ENCODE measurements at regions of chr18 and their contacts with region 1.

Region 1: GRCh38 chr18:50662177-50662576 is 102.3 kb downstream of the MAPK4 start:
- DNase-seq: no peak
- H3K4me3 ChIP-seq: no peak overlapping the region
- H3K27ac ChIP-seq: no peak overlapping the region
- H3K4me1 ChIP-seq: no peaks in the 10 kb centered on the region
- H3K27me3 ChIP-seq: no peaks in the 10 kb centered on the region
- CTCF ChIP-seq: no peak
- POLR2A ChIP-seq: no peak

Region 2: DNA sequence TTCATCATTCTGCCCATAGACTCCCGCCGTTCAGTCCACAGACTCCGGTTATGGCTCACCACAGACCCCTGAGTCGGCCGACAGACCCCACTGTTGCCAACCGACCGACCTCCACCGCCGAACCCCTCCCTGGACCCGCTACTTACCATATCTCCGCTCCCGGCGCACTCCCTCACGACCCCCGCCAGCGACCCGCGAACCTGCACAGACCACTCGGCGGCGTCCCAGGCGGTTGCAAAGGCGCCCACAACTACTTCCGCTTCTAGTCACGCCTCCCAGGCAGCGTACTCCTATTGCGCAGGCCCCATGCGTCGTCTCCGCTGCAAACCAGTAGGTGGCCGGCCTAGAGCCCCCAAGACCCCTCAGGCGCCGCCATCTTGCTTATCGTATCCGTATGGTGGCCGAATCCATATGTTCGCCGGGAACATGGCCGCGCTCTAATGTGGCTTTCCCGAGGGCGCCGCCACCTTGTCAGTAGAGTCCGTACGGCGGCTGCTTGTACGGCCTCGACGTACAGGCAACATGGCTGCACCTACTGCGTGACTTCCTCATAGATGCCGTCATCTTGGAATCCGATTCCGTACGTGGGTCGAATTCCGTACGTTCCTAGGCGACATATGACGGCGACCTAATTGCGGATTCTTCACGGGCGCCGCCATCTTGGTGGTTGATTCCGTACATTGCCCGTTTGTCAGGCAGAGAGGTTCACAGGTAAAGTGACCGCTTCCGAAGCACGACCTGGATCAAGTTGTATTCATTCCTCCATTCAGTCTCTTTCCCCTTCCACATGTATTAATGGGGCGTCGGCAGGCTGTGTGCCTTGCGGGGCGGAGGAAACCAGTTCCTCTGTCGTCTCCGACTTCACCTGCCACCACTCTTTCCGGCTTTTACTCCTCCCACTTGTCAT is 374.5 kb before region 1 on chr18 and contains the start of gene CXXC1:
- intact Hi-C with region 1: loop called (anchors 10 kb)
- DNase-seq: peak; percentile 98
- H3K4me3 ChIP-seq: peak within 1 kb of the TSS; percentile 66 to 81
- H3K27ac ChIP-seq: peak within 1 kb of the TSS; percentile 81 to 89
- H3K4me1 ChIP-seq: no peaks in the 10 kb centered on the region
- H3K27me3 ChIP-seq: no peaks in the 10 kb centered on the region
- CTCF ChIP-seq: peak in 2 of 4 experiments; percentile 77 to 85
- POLR2A ChIP-seq: peak; percentile 31
- total RNA-seq, gene CXXC1: 61.9 to 87.4 TPM

Region 3: GRCh38 chr18:50507120-50507590 is 155.0 kb before region 1 on chr18:
- intact Hi-C with region 1: loop called (anchors 10 kb)
- DNase-seq: peak; percentile 29
- H3K4me3 ChIP-seq: no peak overlapping the region
- H3K27ac ChIP-seq: no peak overlapping the region
- H3K4me1 ChIP-seq: no peaks in the 10 kb centered on the region
- H3K27me3 ChIP-seq: no peaks in the 10 kb centered on the region
- CTCF ChIP-seq: peak in 3 of 4 experiments; percentile 66 to 83 (median 72)
- POLR2A ChIP-seq: no peak

Region 4: GRCh38 chr18:50619861-50620275 is 42.3 kb before region 1 on chr18:
- intact Hi-C with region 1: loop called (anchors 5 kb)
- DNase-seq: peak; percentile 54
- H3K4me3 ChIP-seq: no peak overlapping the region
- H3K27ac ChIP-seq: peak overlapping the region; percentile 69 to 74
- H3K4me1 ChIP-seq: peaks cover 15% of the 10 kb centered on the region
- H3K27me3 ChIP-seq: no peaks in the 10 kb centered on the region
- CTCF ChIP-seq: no peak
- POLR2A ChIP-seq: no peak

Region 5: DNA sequence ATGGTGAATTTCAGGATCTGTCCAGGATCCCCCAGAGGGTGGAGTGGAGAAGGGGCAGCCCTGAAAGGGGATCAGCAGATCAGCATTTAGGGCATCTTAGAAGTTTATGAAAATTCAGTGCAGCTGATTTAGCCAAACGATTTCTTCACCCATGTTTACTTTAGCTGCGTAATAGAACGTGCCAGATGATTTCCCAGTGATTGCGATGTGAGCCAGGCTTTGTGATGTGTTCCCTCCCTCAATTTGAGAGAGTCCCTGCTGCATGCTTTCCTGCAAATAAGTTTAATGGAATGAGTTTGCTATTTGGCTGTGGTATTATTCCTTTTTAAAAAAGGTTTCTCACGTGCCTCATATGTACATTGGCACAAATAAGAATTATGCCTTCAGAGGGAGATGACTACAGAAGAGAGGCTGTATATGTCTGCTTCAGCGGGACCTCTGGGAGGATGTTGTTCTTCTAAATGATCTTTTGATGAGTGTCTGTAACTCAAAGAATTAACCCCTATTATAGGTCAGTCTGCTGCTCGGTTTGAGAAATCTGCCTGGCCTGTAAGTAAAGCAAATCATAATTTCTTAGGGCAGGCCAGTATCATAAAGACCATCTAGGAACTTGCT is 45.8 kb after region 1 on chr18:
- intact Hi-C with region 1: loop called (anchors 5 kb)
- DNase-seq: peak; percentile 43
- H3K4me3 ChIP-seq: no peak overlapping the region
- H3K27ac ChIP-seq: no peak overlapping the region
- H3K4me1 ChIP-seq: peaks cover 5% of the 10 kb centered on the region
- H3K27me3 ChIP-seq: no peaks in the 10 kb centered on the region
- CTCF ChIP-seq: no peak
- POLR2A ChIP-seq: no peak

Region 6: GRCh38 chr18:50757358-50757757 is 95.2 kb after region 1 on chr18:
- intact Hi-C with region 1: loop called (anchors 5 kb)
- DNase-seq: no peak
- H3K4me3 ChIP-seq: no peak overlapping the region
- H3K27ac ChIP-seq: no peak overlapping the region
- H3K4me1 ChIP-seq: no peaks in the 10 kb centered on the region
- H3K27me3 ChIP-seq: no peaks in the 10 kb centered on the region
- CTCF ChIP-seq: no peak
- POLR2A ChIP-seq: no peak

Region 7: GRCh38 chr18:50786864-50787263 is 124.7 kb after region 1 on chr18:
- intact Hi-C with region 1: loop called (anchors 10 kb)
- DNase-seq: no peak
- H3K4me3 ChIP-seq: no peak overlapping the region
- H3K27ac ChIP-seq: no peak overlapping the region
- H3K4me1 ChIP-seq: no peaks in the 10 kb centered on the region
- H3K27me3 ChIP-seq: no peaks in the 10 kb centered on the region
- CTCF ChIP-seq: no peak
- POLR2A ChIP-seq: no peak

Region 8: DNA sequence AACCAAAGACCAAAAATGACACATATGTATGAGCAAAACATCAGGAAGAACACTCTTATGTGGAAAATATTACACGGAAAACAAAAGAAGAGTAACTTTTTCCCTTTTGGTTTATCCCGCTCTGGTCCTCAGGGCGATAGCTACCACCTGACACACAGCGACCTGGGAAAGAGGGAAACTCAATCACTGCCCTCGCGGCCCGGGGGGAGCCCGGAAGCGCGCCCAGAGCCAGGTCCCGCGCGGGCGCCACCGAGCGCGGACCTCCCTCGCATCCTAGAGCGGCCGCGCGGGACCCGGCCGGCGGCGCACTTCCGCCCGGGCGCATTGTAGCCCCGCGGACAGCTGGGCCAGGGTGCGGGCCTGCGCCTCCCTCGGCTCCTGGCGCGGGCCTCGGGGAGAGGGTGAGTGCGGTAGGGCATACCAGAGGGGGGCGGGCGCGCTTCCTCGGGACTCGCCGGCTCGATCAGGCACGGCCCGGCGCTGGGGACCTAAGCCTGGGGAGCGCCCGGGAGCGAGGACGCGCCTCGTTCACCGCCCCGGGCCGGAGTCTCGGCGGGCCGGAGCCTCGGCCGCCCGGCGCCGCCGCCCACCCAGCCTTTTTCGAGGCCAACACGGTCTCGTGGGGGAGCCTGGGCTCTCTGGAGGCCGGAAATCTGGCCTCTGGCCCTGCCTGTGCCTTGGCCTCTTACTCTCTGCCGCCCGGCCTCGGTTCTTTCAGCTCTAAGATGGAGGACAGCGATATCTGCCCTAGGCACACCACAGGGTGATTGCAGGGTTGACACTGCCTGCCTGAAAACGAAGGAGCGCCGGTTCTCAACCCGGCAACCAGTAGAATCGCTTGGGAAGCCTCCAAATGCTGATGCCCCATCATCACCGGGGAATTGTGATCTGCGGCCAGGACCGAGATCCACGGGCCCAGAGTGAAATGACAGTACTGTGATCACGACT is 305.8 kb after region 1 on chr18 and contains the start of gene ELAC1:
- intact Hi-C with region 1: no loop called
- DNase-seq: peak; percentile 62
- H3K4me3 ChIP-seq: peak within 1 kb of the TSS; percentile 91 to 93
- H3K27ac ChIP-seq: peak within 1 kb of the TSS; percentile 96 to 98
- H3K4me1 ChIP-seq: peaks cover 5% of the 10 kb centered on the region
- H3K27me3 ChIP-seq: no peaks in the 10 kb centered on the region
- CTCF ChIP-seq: peak in 2 of 4 experiments; percentile 4 to 17
- POLR2A ChIP-seq: peak; percentile 71
- total RNA-seq, gene ELAC1: 7.1 to 16.0 TPM